ENCODE measurements at regions of chr17 and their contacts with region 1.

Region 1: DNA sequence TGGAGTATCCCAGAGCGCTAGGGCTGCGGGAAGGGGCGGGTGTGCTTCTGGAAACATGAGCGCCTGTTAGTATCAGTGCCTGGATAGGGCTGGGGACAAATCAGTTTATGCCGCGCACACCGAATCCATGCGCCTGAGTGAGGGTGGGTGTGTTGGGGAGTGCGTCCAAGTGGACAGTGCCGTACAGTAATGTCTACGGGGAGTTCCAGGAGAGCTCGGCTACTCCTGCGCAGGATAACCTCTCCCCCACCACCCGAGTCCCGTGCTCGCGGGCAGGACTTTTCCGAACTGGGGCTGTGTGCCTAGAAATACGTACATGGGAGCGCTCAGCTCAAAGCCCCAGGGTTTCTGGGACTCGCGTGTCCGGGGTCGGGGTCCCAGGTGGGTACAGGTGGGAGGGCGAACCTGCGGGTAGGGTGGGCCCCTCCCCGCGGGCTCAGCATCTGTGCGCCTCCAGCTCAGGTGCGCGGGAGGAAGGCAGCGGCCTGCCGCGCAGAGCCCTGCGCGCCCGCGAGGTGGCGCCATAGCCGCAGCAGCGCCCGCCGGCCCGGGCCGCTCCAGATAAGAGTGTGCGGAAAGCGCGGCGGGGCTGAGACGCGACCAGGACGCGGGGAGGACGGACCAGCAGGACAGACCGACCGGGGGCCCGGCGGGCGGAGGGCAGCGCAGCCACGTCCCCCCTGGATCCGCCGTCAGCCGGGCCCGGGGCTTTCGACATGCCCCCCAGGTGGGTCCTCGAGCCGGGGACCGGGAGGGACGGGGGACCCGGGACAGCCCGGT is at the start of gene HIC1:
- DNase-seq: peak in 1 of 2 donors; percentile 85
- H3K4me3 ChIP-seq: peak within 1 kb of the TSS; percentile 57 to 77
- H3K27ac ChIP-seq: peak within 1 kb of the TSS; percentile 71 to 77
- H3K4me1 ChIP-seq: peaks cover 27 to 29% of the 10 kb centered on the region in 2 donors
- H3K27me3 ChIP-seq: no peaks in the 10 kb centered on the region
- CTCF ChIP-seq: peak; percentile 71 to 97 (median 92)
- total RNA-seq, gene HIC1: 131 TPM

Region 2: DNA sequence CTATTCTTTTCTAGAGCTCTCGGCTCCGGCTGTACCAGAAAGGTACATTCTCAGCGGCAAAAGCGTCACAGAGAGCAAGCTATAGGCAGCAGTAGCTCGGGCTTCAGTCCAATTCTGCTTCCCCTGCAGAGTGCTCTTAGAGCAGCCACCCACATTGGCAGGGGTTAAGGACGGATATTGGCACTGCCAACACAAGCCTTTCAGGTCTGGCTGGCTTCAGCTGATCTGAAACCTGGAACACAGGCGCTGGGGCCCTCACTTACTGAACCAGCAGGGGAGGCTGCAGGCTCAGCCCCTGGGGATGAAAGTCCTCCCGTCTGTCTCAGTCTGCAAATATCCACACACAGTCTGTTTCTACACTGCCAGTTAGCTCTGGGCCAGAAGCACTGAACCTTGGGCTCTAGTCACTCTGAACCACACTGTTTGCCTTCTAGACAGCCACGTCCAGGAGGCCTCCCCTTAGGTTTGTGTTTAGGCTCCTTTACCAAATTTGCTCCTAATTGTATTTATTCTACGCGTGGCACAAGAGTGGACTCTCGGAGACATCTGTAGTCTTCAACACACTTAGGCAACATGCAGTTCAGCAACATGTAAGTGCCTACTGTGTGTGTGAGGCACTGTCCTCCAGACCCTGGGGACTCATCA is 40.3 kb after region 1 on chr17:
- intact Hi-C with region 1: loop called (anchors 5 kb)
- DNase-seq: peak in 1 of 2 donors; percentile 83
- H3K4me3 ChIP-seq: no peak overlapping the region
- H3K27ac ChIP-seq: peak overlapping the region; percentile 38 to 44
- H3K4me1 ChIP-seq: peaks cover 0 to 16% of the 10 kb centered on the region in 2 donors
- H3K27me3 ChIP-seq: no peaks in the 10 kb centered on the region
- CTCF ChIP-seq: peak; percentile 74 to 91 (median 88)

Region 3: DNA sequence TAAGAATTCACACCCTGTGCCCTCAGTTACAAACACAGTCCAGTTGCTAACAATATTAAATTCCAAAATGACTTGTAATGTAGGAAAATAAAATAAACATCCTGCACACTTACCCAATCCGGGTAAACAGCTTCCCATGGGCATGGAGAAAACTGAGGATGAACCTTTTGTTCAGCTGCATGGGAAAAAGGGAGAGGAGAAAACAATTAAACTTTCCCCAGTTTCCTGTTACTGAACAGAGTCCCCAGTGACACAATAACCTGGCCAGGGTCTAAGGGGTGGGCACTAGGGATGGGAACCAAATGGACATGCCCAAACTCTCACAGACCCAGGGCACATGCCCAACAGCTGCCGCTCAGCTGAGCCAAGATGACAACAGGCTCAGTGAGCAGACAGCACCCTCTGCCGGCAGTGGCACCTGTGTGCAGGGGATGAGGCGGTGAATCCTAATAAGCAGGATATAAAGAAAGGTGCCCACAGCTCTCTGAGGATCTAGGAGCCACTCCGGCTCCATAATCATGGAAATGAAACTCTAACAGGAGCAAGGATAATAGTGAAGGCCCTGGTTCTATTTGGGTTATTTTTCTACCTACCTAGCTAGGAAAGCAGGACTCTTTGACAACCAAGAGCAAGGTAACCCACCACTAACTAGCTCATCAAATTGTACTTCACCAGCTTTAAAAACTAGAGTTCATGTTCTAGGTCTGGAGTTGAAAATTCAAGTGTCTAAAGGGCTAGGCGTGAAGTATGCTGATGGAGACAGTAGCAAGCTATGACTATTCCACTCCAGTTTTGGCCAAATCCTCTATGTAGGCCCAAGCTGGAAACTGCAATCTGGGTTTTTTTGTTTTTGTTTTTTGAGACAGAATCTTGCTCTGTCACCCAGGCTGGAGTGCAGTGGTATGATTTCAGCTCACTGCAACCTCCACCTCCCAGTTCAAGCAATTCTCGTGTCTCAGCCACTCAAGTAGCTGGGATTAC is 190.1 kb after region 1 on chr17:
- intact Hi-C with region 1: loop called (anchors 1 kb)
- DNase-seq: peak; percentile 52 to 93
- H3K4me3 ChIP-seq: no peak overlapping the region
- H3K27ac ChIP-seq: peak overlapping the region; percentile 56 to 66
- H3K4me1 ChIP-seq: peaks cover 6 to 20% of the 10 kb centered on the region in 2 donors
- H3K27me3 ChIP-seq: no peaks in the 10 kb centered on the region
- CTCF ChIP-seq: peak; percentile 97 to 99 (median 98)

Region 4: GRCh38 chr17:2282297-2282873 is 227.7 kb after region 1 on chr17:
- intact Hi-C with region 1: loop called (anchors 2 kb)
- DNase-seq: peak in 1 of 2 donors; percentile 67
- H3K4me3 ChIP-seq: no peak overlapping the region
- H3K27ac ChIP-seq: no peak overlapping the region
- H3K4me1 ChIP-seq: no peaks in the 10 kb centered on the region
- H3K27me3 ChIP-seq: no peaks in the 10 kb centered on the region
- CTCF ChIP-seq: peak; percentile 49 to 66 (median 58)

Region 5: GRCh38 chr17:2347547-2348307 is 293.0 kb after region 1 on chr17:
- intact Hi-C with region 1: no loop called
- DNase-seq: no peak
- H3K4me3 ChIP-seq: no peak overlapping the region
- H3K27ac ChIP-seq: no peak overlapping the region
- H3K4me1 ChIP-seq: no peaks in the 10 kb centered on the region
- H3K27me3 ChIP-seq: no peaks in the 10 kb centered on the region
- CTCF ChIP-seq: no peak

Region 6: DNA sequence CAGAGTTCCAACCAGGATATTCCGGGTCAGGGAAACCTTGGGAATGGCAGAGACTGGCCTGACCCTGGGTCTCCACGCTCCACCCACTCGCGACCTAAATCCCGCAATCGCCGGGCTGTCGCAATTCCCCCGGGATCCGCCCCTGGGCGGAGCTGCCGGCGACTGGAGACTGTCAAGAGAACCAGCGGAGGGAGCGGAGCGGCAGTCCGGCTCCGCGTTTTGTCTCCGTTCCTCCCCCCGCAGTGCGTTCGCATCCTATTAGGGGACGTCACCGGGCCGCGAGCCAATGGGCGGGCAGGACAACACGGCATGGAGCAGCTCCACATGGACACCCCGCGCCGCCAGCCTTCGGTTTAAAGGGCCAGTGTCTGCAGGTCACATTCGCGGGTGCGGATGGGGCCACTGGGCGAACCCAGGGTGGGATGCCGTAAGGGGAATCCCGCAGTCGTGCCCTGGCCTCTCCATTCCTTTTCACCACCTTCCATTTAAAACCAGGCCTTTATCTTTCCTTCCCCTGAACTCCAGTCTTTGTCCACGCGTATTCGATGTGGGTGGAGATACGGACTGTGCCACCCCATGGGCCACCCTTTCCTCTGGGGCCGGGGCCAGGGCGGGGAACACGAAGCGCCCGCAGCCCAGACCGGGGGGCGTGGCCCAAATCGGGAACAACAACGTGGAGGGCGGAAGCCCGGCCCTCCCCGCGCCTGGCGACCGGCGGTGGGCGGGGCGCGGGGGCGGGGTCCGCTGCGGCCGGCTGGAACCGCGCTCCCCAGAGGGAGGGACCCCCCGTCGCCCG is 346.9 kb after region 1 on chr17:
- intact Hi-C with region 1: loop called (anchors 10 kb)
- DNase-seq: peak; percentile 100
- H3K4me3 ChIP-seq: peak overlapping the region; percentile 84 to 86
- H3K27ac ChIP-seq: peak overlapping the region; percentile 97 to 98
- H3K4me1 ChIP-seq: peaks cover 26 to 60% of the 10 kb centered on the region in 2 donors
- H3K27me3 ChIP-seq: no peaks in the 10 kb centered on the region
- CTCF ChIP-seq: no peak

Measured in ascending aorta (tissue), 2 donors.